ENCODE measurements at regions of chr4 and their contacts with region 1.

Region 1: GRCh38 chr4:85658766-85659439 is 184.0 kb downstream of the ARHGAP24 start:
- DNase-seq: peak; percentile 50
- ATAC-seq: peak; percentile 23
- H3K4me3 ChIP-seq: no peak overlapping the region
- H3K4me3 Mint-ChIP-seq: peak overlapping the region; percentile 59
- H3K27ac ChIP-seq: peak overlapping the region; percentile 62 to 81
- H3K27ac Mint-ChIP-seq: peak overlapping the region; percentile 86
- H3K4me1 ChIP-seq: peaks cover 38 to 46% of the 10 kb centered on the region in 2 donors
- H3K4me1 Mint-ChIP-seq: peaks cover 45% of the 10 kb centered on the region
- H3K27me3 ChIP-seq: no peaks in the 10 kb centered on the region
- H3K27me3 Mint-ChIP-seq: no peaks in the 10 kb centered on the region
- CTCF ChIP-seq: peak; percentile 16

Region 2: DNA sequence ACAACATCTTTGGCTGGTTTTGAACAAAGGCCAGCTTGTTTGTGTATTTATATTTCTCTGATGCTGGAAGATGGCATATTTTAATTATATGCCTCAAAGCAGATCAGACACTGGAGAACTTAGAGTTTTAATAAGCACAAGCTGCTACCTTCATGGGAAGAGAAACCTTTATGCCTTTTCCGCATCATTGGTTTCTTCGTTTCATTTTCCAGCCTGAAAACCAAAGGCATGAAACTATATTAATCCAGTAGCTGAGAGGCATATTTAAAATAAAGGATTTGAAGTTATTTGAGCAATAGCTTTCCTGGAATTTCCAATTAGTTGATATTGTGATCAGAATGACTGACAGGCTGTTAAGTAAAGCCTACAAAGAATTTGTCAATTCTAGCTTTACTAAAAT is 43.0 kb before region 1 on chr4:
- CTCF ChIA-PET with region 1: no interaction called
- POLR2A ChIA-PET with region 1: no interaction called
- intact Hi-C with region 1: loop called (anchors 5 kb)
- DNase-seq: peak; percentile 54
- ATAC-seq: no peak
- H3K4me3 ChIP-seq: no peak overlapping the region
- H3K4me3 Mint-ChIP-seq: no peak overlapping the region
- H3K27ac ChIP-seq: peak overlapping the region; percentile 40 to 57
- H3K27ac Mint-ChIP-seq: no peak overlapping the region
- H3K4me1 ChIP-seq: peaks cover 6 to 11% of the 10 kb centered on the region in 2 donors
- H3K4me1 Mint-ChIP-seq: peaks cover 14% of the 10 kb centered on the region
- H3K27me3 ChIP-seq: no peaks in the 10 kb centered on the region
- H3K27me3 Mint-ChIP-seq: no peaks in the 10 kb centered on the region
- CTCF ChIP-seq: no peak

Region 3: GRCh38 chr4:85741921-85742591 is 83.2 kb after region 1 on chr4:
- CTCF ChIA-PET with region 1: interaction called, 27 read pairs
- POLR2A ChIA-PET with region 1: no interaction called
- intact Hi-C with region 1: loop called (anchors 2 kb)
- DNase-seq: no peak
- ATAC-seq: no peak
- H3K4me3 ChIP-seq: no peak overlapping the region
- H3K4me3 Mint-ChIP-seq: no peak overlapping the region
- H3K27ac ChIP-seq: no peak overlapping the region
- H3K27ac Mint-ChIP-seq: peak overlapping the region; percentile 5
- H3K4me1 ChIP-seq: peaks cover 62 to 65% of the 10 kb centered on the region in 2 donors
- H3K4me1 Mint-ChIP-seq: peaks cover 60% of the 10 kb centered on the region
- H3K27me3 ChIP-seq: no peaks in the 10 kb centered on the region
- H3K27me3 Mint-ChIP-seq: no peaks in the 10 kb centered on the region
- CTCF ChIP-seq: no peak